ENCODE measurements at regions of chr20 and their contacts with region 1.

Region 1: DNA sequence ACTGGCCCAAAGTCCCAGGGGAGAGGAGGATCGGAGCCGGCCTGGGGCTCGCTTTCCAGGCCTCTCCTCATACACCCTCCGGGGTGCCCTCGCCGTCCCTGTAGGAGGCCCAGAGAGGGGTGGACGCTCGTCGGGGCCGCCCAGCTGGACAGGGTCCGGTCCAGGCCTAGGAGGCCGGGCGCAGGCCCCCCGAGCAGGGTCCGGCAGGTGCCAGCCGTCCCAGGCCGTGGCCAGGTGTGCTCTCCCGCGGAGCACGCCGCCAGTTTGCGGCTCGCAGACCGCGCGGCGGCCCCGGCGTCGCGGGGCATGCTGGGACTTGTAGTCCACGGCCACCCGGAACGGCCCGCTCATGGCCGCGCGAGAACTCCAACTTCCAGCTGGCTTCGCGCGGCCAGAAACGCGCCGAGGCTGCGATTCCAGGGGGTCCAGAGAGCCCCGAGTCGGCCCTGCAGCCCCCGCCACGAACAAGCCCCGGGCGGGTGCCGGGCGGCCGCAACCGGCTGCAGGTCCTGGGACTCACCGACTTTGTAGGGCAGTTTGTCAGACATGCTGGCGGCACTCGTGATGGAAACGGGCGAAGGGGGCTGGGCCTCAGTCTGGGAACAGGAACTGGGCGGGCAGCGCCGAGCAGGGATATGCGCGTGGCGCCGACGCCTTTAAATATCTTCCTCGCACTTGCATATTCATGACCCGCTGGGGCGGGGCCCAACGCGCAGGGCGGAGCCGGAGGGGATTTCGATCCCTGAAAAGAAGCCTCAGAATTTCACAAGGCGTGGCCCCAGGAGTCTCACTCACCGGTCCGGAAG is at the start of gene AHCY:
- DNase-seq: peak; percentile 98
- H3K4me3 ChIP-seq: peak within 1 kb of the TSS; percentile 84 to 92
- H3K27ac ChIP-seq: peak within 1 kb of the TSS; percentile 91 to 94
- H3K4me1 ChIP-seq: peaks cover 2% of the 10 kb centered on the region
- H3K27me3 ChIP-seq: no peaks in the 10 kb centered on the region
- CTCF ChIP-seq: peak in 1 of 4 experiments; percentile 18
- POLR2A ChIP-seq: peak; percentile 80
- total RNA-seq, gene AHCY: 162 to 170 TPM

Region 2: GRCh38 chr20:33933469-33933909 is 369.4 kb before region 1 on chr20:
- intact Hi-C with region 1: no loop called
- DNase-seq: peak; percentile 46
- H3K4me3 ChIP-seq: no peak overlapping the region
- H3K27ac ChIP-seq: peak overlapping the region in 1 of 2 donors; percentile 35
- H3K4me1 ChIP-seq: no peaks in the 10 kb centered on the region
- H3K27me3 ChIP-seq: no peaks in the 10 kb centered on the region
- CTCF ChIP-seq: peak in 3 of 4 experiments; percentile 26 to 56 (median 48)
- POLR2A ChIP-seq: no peak

Region 3: DNA sequence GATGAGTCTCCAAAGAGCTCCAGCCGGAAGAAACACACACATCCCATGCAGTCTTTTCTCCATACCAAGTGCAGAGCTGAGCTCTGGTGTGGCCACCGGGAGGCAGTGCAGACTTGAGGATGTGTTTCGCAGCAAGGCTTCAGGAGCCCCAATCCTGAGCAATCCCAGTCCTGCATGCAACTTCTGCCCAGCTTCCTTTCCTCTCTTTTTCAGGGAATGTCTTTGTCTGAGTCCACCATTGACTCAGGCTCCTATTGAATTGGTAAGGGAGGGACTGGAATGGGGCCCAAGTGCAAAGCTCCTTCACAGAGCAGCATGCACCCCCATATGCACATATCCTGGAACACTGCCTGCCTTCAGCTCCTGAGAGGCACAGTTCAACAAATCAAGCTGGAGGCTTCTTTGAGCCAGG is 112.2 kb before region 1 on chr20:
- intact Hi-C with region 1: loop called (anchors 5 kb)
- DNase-seq: peak; percentile 76
- H3K4me3 ChIP-seq: no peak overlapping the region
- H3K27ac ChIP-seq: no peak overlapping the region
- H3K4me1 ChIP-seq: no peaks in the 10 kb centered on the region
- H3K27me3 ChIP-seq: no peaks in the 10 kb centered on the region
- CTCF ChIP-seq: peak in 3 of 4 experiments; percentile 60 to 79 (median 74)
- POLR2A ChIP-seq: no peak

Region 4: GRCh38 chr20:34704177-34705007 is 401.5 kb after region 1 on chr20 and contains the start of gene TP53INP2:
- intact Hi-C with region 1: loop called (anchors 10 kb)
- DNase-seq: peak; percentile 92
- H3K4me3 ChIP-seq: peak within 1 kb of the TSS; percentile 92 to 100
- H3K27ac ChIP-seq: peak within 1 kb of the TSS; percentile 97 to 100
- H3K4me1 ChIP-seq: no peaks in the 10 kb centered on the region
- H3K27me3 ChIP-seq: no peaks in the 10 kb centered on the region
- CTCF ChIP-seq: peak in 1 of 4 experiments; percentile 9
- POLR2A ChIP-seq: peak; percentile 87
- total RNA-seq, gene TP53INP2: 26.0 to 39.4 TPM